HCT116 (cell line): ENCODE measurements at regions of chr17 and their contacts with region 1.

Region 1: DNA sequence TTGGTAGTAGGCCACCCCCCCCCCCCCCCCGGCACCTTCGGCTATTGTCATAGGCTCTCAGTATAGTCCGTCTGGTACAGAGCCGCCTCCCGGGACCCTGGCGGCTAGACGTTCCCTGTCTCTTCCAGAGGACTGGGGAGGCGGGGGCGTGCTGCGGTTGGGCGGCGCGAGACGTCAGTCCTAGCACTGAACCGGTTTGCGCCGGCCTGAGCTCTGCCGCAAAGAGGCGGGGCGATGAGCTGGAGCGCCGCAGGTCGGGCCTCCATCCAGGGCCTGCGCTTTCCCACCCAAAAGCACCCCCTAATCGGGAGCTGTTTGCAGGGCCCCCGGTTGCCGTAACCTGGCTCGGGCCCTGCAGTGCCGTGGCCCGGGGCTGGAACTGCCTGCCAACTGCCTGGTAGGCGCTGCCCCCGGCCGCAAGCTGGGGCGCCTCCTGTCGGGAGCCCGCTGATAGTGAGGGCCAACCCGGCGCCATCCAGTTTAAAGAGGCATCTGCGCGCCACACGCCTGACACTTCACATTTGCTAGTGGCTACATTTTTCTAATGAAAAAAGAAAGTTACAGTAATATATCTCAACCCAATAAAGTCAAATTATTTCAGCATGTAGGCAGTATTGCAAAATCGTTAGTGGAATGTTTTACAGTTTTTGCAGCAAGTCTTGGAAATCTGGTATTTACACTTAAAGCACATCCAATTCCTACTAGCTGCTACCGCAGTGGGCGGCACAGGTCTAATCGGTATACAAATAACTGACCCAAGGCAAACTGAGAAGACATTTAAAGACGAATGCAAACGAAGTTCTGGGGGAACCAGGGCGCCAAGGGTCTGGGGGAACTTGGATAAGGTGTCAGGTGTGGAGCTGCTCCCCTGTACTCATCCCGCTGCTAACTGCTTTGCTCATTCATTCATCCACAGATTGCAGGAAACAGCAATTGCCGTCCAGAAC is 748 bp upstream of the USP22 start:
- DNase-seq: peak; percentile 95
- ATAC-seq: peak; percentile 86
- H3K4me3 ChIP-seq: peak overlapping the region; percentile 54 to 59
- H3K27ac ChIP-seq: peak overlapping the region; percentile 96
- H3K4me1 ChIP-seq: peaks cover 11 to 28% of the 10 kb centered on the region in 2 experiments
- H3K27me3 ChIP-seq: no peaks in the 10 kb centered on the region
- CTCF ChIP-seq: peak; percentile 48 to 91 (median 80); a peak in 5 of 6 replicates
- POLR2A ChIP-seq: peak; percentile 32
- RAD21 ChIP-seq: peak; percentile 29; the same call in 1 of the 2 replicates

Region 2: DNA sequence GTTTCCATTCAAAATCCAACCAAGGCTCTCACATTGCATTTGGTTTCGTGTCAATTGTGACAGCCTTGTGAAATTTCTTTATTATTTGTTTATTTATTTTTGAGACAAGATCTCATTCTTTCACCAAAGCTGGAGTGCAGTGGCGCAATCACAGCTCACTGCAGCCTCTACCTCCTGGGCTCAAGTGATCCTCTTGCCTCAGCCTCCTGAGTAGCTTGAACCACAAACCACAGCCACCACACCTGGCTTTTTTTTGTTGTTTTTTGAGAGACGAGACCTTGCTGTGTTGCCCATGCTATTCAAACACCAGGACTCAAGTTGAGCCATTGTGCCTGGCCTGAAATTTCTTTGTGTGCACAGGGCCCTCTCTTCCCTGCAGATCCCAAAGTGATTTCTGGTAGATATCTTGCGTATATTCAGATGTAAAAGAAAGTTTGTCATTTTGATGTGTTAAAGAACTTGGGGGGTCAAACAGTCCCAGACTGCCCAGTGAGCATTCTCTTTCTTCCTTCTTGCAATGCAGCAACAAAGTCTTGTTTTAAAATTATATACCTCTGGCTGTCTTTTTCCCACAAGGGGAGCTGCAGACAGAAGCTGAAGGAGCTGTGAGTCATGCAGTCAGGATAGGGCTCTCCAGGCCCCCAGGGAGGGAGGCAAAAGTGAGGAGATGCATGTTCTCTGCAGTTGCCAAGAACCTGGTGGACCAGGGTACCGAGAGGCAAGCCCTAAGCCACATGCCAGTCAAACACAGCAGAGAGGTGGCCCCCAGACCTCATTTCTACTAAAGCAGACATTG is 14.7 kb after region 1 on chr17:
- CTCF ChIA-PET with region 1: interaction called, 20 read pairs
- POLR2A ChIA-PET with region 1: interaction called, 3 read pairs
- RAD21 ChIA-PET with region 1: interaction called in 1 of 2 experiments, 3 read pairs
- intact Hi-C with region 1: no loop called
- DNase-seq: no peak
- ATAC-seq: no peak
- H3K4me3 ChIP-seq: no peak overlapping the region
- H3K27ac ChIP-seq: no peak overlapping the region
- H3K4me1 ChIP-seq: no peaks in the 10 kb centered on the region
- H3K27me3 ChIP-seq: no peaks in the 10 kb centered on the region
- CTCF ChIP-seq: 0 out of 6 replicates have a peak, but pooled peaks of 1 of the 3 experiments have one; percentile 17
- POLR2A ChIP-seq: no peak
- RAD21 ChIP-seq: no peak

Region 3: DNA sequence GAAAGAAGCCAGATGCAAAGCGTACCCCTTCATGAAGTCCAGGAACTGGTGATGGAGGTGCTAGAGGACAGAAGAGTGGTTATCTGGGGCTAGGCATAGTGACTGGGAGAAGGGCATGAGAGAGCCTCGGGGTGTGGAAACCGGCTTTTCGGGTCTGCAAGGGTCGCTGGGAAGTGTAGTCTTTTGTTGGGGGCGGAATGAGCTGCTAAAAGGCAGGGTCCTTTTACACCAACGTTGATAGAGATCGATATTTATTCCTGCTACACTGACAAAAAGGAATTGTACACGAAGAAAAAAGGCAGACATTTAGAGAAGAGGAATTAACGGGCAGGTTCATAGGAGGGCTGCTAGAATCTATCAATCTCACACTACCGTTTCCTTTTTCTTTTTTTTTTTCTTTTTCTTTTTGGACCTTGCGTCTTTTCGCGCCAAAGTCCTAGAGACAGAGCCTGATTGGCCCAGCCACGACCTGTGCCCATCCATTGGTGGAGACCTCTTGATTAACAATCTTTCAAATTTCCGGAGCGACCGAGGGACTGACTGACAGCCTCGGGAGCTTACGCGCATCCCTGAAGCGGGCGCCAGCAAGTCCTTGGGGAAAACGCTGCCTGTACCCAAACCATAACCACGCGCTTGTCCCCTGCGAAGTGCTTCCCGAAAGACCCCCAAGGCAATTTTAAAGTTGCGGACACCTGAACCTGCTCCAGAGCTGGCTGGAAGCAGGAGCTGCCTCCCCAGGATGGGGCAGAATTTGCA is 55.6 kb after region 1 on chr17:
- CTCF ChIA-PET with region 1: interaction called, 10 read pairs
- POLR2A ChIA-PET with region 1: interaction called, 12 read pairs
- RAD21 ChIA-PET with region 1: no interaction called
- intact Hi-C with region 1: loop called (anchors 1 kb)
- DNase-seq: peak; percentile 90
- ATAC-seq: peak; percentile 97
- H3K4me3 ChIP-seq: peak overlapping the region; percentile 64 to 85
- H3K27ac ChIP-seq: peak overlapping the region; percentile 49
- H3K4me1 ChIP-seq: peaks cover 4 to 23% of the 10 kb centered on the region in 2 experiments; a peak in 3 of 4 replicates
- H3K27me3 ChIP-seq: no peaks in the 10 kb centered on the region
- CTCF ChIP-seq: no peak
- POLR2A ChIP-seq: no peak
- RAD21 ChIP-seq: no peak

Region 4: GRCh38 chr17:21119247-21119918 is 75.8 kb after region 1 on chr17:
- CTCF ChIA-PET with region 1: interaction called, 14 read pairs
- POLR2A ChIA-PET with region 1: no interaction called
- RAD21 ChIA-PET with region 1: no interaction called
- intact Hi-C with region 1: loop called (anchors 5 kb)
- DNase-seq: peak; percentile 74
- ATAC-seq: peak; percentile 94
- H3K4me3 ChIP-seq: no peak overlapping the region
- H3K27ac ChIP-seq: no peak overlapping the region
- H3K4me1 ChIP-seq: peaks cover 6 to 10% of the 10 kb centered on the region in 2 experiments; a peak in 3 of 4 replicates
- H3K27me3 ChIP-seq: no peaks in the 10 kb centered on the region
- CTCF ChIP-seq: peak; percentile 73 to 95 (median 91); a peak in 5 of 6 replicates
- POLR2A ChIP-seq: no peak
- RAD21 ChIP-seq: peak; percentile 73

Region 5: GRCh38 chr17:21214015-21214776 is 170.6 kb after region 1 on chr17 and contains the start of gene TMEM11:
- CTCF ChIA-PET with region 1: no interaction called
- POLR2A ChIA-PET with region 1: no interaction called
- RAD21 ChIA-PET with region 1: no interaction called
- intact Hi-C with region 1: loop called (anchors 5 kb)
- DNase-seq: peak; percentile 79
- ATAC-seq: peak; percentile 93
- H3K4me3 ChIP-seq: peak within 1 kb of the TSS; percentile 79 to 98
- H3K27ac ChIP-seq: peak within 1 kb of the TSS; percentile 87
- H3K4me1 ChIP-seq: peaks cover 17 to 27% of the 10 kb centered on the region in 2 experiments; a peak in 3 of 4 replicates
- H3K27me3 ChIP-seq: no peaks in the 10 kb centered on the region
- CTCF ChIP-seq: no peak
- POLR2A ChIP-seq: peak; percentile 54
- RAD21 ChIP-seq: no peak
- total RNA-seq, gene TMEM11: 31.0 TPM

Region 6: GRCh38 chr17:21275579-21276263 is 232.2 kb after region 1 on chr17:
- CTCF ChIA-PET with region 1: interaction called, 6 read pairs
- POLR2A ChIA-PET with region 1: no interaction called
- RAD21 ChIA-PET with region 1: no interaction called
- intact Hi-C with region 1: loop called (anchors 2 kb)
- DNase-seq: no peak
- ATAC-seq: peak; percentile 88
- H3K4me3 ChIP-seq: peak overlapping the region; percentile 52 to 57
- H3K27ac ChIP-seq: peak overlapping the region; percentile 65; the same call in 1 of the 2 replicates
- H3K4me1 ChIP-seq: peaks cover 23 to 52% of the 10 kb centered on the region in 2 experiments
- H3K27me3 ChIP-seq: no peaks in the 10 kb centered on the region
- CTCF ChIP-seq: no peak
- POLR2A ChIP-seq: peak; percentile 73
- RAD21 ChIP-seq: no peak

Region 7: GRCh38 chr17:21511363-21512198 is 468.0 kb after region 1 on chr17:
- CTCF ChIA-PET with region 1: no interaction called
- POLR2A ChIA-PET with region 1: no interaction called
- RAD21 ChIA-PET with region 1: no interaction called
- intact Hi-C with region 1: loop called (anchors 5 kb)
- DNase-seq: peak; percentile 61
- ATAC-seq: peak; percentile 95
- H3K4me3 ChIP-seq: peak overlapping the region in 1 of 2 experiments; percentile 28; a peak in 2 of 4 replicates
- H3K27ac ChIP-seq: no peak overlapping the region
- H3K4me1 ChIP-seq: peaks cover 2 to 14% of the 10 kb centered on the region in 2 experiments; a peak in 2 of 4 replicates
- H3K27me3 ChIP-seq: no peaks in the 10 kb centered on the region
- CTCF ChIP-seq: peak; percentile 71 to 78 (median 76)
- POLR2A ChIP-seq: no peak
- RAD21 ChIP-seq: peak; percentile 70